ENCODE measurements at regions of chr11 and their contacts with region 1.

Region 1: GRCh38 chr11:80320765-80321164 is 879.9 kb upstream of the TENM4 start:
- DNase-seq: no peak
- H3K4me3 ChIP-seq: no peak overlapping the region
- CTCF ChIP-seq: peak; percentile 33

Region 2: DNA sequence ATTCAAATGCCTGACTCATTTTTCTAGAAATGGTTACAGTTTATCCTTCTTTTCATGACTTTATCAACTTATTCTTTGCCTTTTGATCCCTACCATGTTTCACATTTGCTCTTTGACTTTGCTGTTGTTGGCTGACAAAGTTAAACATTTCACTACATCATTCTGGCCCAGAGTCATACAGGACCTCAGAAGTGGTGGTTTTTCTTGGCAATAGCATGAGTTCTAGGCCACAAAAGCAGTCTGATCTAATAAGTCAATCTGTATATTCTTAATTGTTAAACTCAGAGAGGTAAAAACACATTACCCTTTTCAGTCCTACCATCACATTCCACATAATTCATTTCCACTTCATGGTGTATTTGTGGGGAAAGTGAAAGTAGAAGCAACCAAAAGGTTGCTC is 116.7 kb before region 1 on chr11:
- in situ Hi-C with region 1: no loop called
- DNase-seq: peak; percentile 31
- H3K4me3 ChIP-seq: no peak overlapping the region
- CTCF ChIP-seq: no peak

Region 3: GRCh38 chr11:80355251-80355650 is 34.5 kb after region 1 on chr11:
- in situ Hi-C with region 1: loop called (anchors 5 kb)
- DNase-seq: no peak
- H3K4me3 ChIP-seq: no peak overlapping the region
- CTCF ChIP-seq: no peak

Region 4: GRCh38 chr11:80393210-80393609 is 72.4 kb after region 1 on chr11:
- in situ Hi-C with region 1: loop called (anchors 5 kb)
- DNase-seq: no peak
- H3K4me3 ChIP-seq: no peak overlapping the region
- CTCF ChIP-seq: no peak

Region 5: GRCh38 chr11:80441821-80442220 is 121.1 kb after region 1 on chr11:
- in situ Hi-C with region 1: no loop called
- DNase-seq: no peak
- H3K4me3 ChIP-seq: no peak overlapping the region
- CTCF ChIP-seq: no peak